ENCODE measurements at regions of chr22 and their contacts with region 1.

Region 1: DNA sequence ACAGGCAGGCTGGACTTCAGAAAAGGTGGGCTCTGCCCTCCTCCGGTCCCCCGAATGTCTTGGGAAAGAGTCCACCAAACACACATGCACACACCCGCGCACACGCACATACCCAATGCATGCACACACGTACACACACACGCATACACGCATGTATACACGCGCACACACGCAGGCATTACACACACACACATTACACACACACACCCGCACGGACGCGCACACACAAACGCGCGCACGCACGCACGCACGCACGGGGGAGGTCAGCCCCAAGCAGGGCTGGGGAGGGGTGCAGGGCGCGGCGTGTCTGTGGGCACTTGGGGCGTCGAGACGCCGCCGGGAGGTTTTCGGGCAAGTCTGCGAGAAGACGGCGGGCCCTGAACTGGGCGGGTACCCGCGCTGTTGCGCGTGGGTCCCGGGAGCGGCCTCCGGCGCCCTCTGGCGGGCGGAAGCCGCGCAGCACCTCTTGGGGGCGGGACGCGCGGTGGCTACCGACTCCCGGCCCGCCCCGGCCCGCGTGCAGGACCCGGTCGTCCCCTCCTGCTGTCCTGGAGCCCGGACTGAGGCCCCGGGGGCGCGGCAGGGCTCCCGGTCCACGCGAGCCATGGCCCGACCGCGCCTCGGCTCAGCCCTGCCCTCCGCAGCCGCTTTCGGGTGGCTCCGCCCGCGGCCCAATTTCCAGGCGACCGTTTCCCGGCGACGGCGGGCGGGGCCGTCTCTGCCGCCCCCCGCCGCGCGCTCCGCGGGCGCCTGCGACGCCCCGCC is 3.6 kb downstream of the SEPTIN5 start:
- DNase-seq: peak; percentile 68 to 93 (median 86)
- ATAC-seq: peak; percentile 97
- H3K4me3 ChIP-seq: peak overlapping the region; percentile 41
- H3K4me3 Mint-ChIP-seq: peak overlapping the region; percentile 72 to 88 (median 82)
- H3K27ac ChIP-seq: no peak overlapping the region
- H3K27ac Mint-ChIP-seq: peak overlapping the region in 3 of 9 donors; percentile 5 to 14 (median 9)
- H3K4me1 ChIP-seq: peaks cover 0 to 10% of the 10 kb centered on the region in 2 donors
- H3K4me1 Mint-ChIP-seq: peaks cover 0 to 10% (median 8%) of the 10 kb centered on the region in 7 donors
- H3K27me3 ChIP-seq: peaks cover 0 to 3% of the 10 kb centered on the region in 2 donors
- H3K27me3 Mint-ChIP-seq: peaks cover 28 to 59% (median 35%) of the 10 kb centered on the region in 5 donors

Region 2: GRCh38 chr22:19143967-19144400 is 573.9 kb before region 1 on chr22:
- CTCF ChIA-PET with region 1: no interaction called
- POLR2A ChIA-PET with region 1: no interaction called
- intact Hi-C with region 1: loop called in 1 of 2 experiments (anchors 1 kb)
- DNase-seq: peak in 6 of 9 donors; percentile 8 to 40 (median 26)
- ATAC-seq: no peak
- H3K4me3 ChIP-seq: peak overlapping the region; percentile 83
- H3K4me3 Mint-ChIP-seq: peak overlapping the region; percentile 84 to 99 (median 98)
- H3K27ac ChIP-seq: peak overlapping the region; percentile 93
- H3K27ac Mint-ChIP-seq: peak overlapping the region; percentile 91 to 99 (median 97)
- H3K4me1 ChIP-seq: no peaks in the 10 kb centered on the region
- H3K4me1 Mint-ChIP-seq: peaks cover 8 to 32% (median 18%) of the 10 kb centered on the region in 7 donors
- H3K27me3 ChIP-seq: peaks cover 0 to 1% of the 10 kb centered on the region in 2 donors
- H3K27me3 Mint-ChIP-seq: peaks cover 9 to 33% (median 11%) of the 10 kb centered on the region in 5 donors

Region 3: DNA sequence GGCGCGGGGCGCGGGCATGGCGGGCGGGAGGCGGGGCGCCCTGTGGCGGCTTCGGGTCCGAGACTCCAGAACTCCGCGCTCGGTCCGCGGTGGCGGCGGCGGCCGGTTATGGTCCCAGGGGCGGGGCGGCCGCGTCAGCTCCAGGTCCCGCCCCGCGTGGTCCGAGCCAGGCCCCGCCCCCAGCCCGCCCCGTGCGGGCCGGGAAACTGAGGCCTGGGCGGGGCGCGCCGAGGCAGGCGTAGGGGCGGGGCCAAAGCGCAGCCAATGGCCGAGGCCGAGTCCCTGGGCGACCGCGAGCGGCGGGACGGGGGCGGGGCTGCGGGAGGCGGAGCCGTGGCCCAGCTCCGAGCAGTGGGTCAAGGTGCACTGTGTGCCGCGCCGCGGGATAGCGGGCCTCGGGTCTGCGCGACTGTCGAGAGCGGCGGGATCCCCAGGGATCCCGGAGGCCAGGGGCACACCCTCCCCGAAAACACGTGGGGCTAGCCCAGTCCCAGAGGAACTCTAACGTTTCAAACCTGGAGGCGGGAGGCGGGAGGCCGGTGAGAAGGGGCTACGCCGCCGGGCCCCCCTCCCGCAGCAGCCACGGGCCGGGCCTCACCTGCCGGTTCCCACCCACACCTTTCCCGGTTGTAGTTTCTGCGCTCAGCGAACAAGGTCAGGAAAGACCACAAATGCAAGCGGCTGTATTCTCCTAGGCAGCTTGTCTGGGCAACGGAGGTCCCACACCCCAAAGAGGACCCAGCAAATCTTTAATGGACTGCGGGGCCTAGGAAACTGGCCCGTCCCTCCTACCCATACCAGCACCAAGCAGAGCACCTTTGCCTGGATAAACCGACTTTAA is 539.0 kb before region 1 on chr22 and contains the start of gene SLC25A1:
- CTCF ChIA-PET with region 1: no interaction called
- POLR2A ChIA-PET with region 1: no interaction called
- intact Hi-C with region 1: loop called in 1 of 2 experiments (anchors 2 kb)
- DNase-seq: peak in 8 of 9 donors; percentile 42 to 96 (median 49)
- ATAC-seq: peak; percentile 82
- H3K4me3 ChIP-seq: peak within 1 kb of the TSS; percentile 58
- H3K4me3 Mint-ChIP-seq: peak within 1 kb of the TSS; percentile 83 to 92 (median 86)
- H3K27ac ChIP-seq: peak within 1 kb of the TSS; percentile 63
- H3K27ac Mint-ChIP-seq: peak within 1 kb of the TSS; percentile 31 to 92 (median 85)
- H3K4me1 ChIP-seq: peaks cover 7 to 9% of the 10 kb centered on the region in 2 donors
- H3K4me1 Mint-ChIP-seq: peaks cover 13 to 28% (median 23%) of the 10 kb centered on the region in 7 donors
- H3K27me3 ChIP-seq: no peaks in the 10 kb centered on the region
- H3K27me3 Mint-ChIP-seq: no peaks in the 10 kb centered on the region
- total RNA-seq, gene SLC25A1: 19.3 to 34.0 (median 30.7) TPM

Region 4: GRCh38 chr22:19495562-19496323 is 222.1 kb before region 1 on chr22:
- CTCF ChIA-PET with region 1: no interaction called
- POLR2A ChIA-PET with region 1: no interaction called
- intact Hi-C with region 1: loop called in 1 of 2 experiments (anchors 5 kb)
- DNase-seq: peak in 7 of 9 donors; percentile 35 to 67 (median 57)
- ATAC-seq: peak; percentile 63
- H3K4me3 ChIP-seq: no peak overlapping the region
- H3K4me3 Mint-ChIP-seq: no peak overlapping the region
- H3K27ac ChIP-seq: no peak overlapping the region
- H3K27ac Mint-ChIP-seq: peak overlapping the region; percentile 49 to 88 (median 73)
- H3K4me1 ChIP-seq: peaks cover 0 to 9% of the 10 kb centered on the region in 2 donors
- H3K4me1 Mint-ChIP-seq: peaks cover 4 to 17% (median 12%) of the 10 kb centered on the region in 7 donors
- H3K27me3 ChIP-seq: no peaks in the 10 kb centered on the region
- H3K27me3 Mint-ChIP-seq: no peaks in the 10 kb centered on the region

Region 5: DNA sequence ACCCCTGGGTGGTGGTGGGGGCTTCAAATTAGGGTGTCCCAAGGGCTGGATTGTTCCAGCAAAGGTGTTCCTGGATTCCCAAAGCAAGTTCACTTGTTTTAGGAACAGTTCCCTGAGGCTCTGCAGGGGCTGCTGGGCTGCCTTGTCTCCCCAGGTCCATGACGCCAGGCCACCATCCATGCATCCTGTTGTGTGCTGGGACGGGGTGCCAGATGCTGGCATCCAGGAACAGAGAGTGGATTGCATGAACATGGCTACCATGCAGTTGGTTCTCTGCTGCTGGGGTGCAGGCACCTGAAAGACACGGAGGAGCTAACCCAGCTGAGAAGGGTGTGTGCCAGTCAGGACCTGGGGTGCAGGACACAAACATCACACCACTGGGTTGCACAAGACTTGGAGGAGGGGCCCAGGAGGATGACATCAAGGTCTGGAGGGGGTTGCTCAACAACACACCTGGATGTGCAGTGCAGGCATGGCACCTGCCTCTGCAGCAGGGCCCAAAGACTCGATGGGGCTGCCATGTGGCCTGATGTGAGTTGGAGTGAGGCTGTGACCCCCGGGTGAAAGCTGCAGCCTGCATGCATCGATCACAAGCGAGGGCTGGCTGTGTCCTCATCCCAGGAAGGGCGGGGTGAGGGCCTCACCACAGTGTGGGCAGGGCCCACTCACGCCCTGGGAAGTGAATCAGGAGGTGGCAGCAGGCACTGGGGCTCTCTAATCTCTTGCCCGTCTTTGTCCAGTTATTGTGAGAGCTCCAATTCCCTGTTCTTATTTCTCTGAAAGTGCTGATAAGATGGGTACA is 119.6 kb before region 1 on chr22:
- CTCF ChIA-PET with region 1: no interaction called
- POLR2A ChIA-PET with region 1: no interaction called
- intact Hi-C with region 1: no loop called
- DNase-seq: peak in 7 of 9 donors; percentile 20 to 57 (median 38)
- ATAC-seq: no peak
- H3K4me3 ChIP-seq: peak overlapping the region; percentile 25
- H3K4me3 Mint-ChIP-seq: peak overlapping the region; percentile 61 to 88 (median 76)
- H3K27ac ChIP-seq: peak overlapping the region; percentile 75
- H3K27ac Mint-ChIP-seq: peak overlapping the region; percentile 83 to 100 (median 97)
- H3K4me1 ChIP-seq: peaks cover 11 to 63% of the 10 kb centered on the region in 2 donors
- H3K4me1 Mint-ChIP-seq: peaks cover 40 to 95% (median 79%) of the 10 kb centered on the region in 7 donors
- H3K27me3 ChIP-seq: no peaks in the 10 kb centered on the region
- H3K27me3 Mint-ChIP-seq: no peaks in the 10 kb centered on the region

Region 6: GRCh38 chr22:19619144-19620009 is 98.5 kb before region 1 on chr22:
- CTCF ChIA-PET with region 1: no interaction called
- POLR2A ChIA-PET with region 1: no interaction called
- intact Hi-C with region 1: no loop called
- DNase-seq: peak in 2 of 9 donors; percentile 8 to 16
- ATAC-seq: no peak
- H3K4me3 ChIP-seq: no peak overlapping the region
- H3K4me3 Mint-ChIP-seq: peak overlapping the region in 5 of 10 donors; percentile 20 to 43 (median 36)
- H3K27ac ChIP-seq: no peak overlapping the region
- H3K27ac Mint-ChIP-seq: peak overlapping the region in 6 of 9 donors; percentile 9 to 76 (median 54)
- H3K4me1 ChIP-seq: peaks cover 0 to 13% of the 10 kb centered on the region in 2 donors
- H3K4me1 Mint-ChIP-seq: peaks cover 14 to 27% (median 19%) of the 10 kb centered on the region in 7 donors
- H3K27me3 ChIP-seq: no peaks in the 10 kb centered on the region
- H3K27me3 Mint-ChIP-seq: no peaks in the 10 kb centered on the region

Region 7: GRCh38 chr22:19679522-19680101 is 38.3 kb before region 1 on chr22:
- CTCF ChIA-PET with region 1: interaction called, 3 read pairs
- POLR2A ChIA-PET with region 1: no interaction called
- intact Hi-C with region 1: loop called (anchors 1 to 2 kb)
- DNase-seq: peak; percentile 5 to 54 (median 23)
- ATAC-seq: peak; percentile 54
- H3K4me3 ChIP-seq: no peak overlapping the region
- H3K4me3 Mint-ChIP-seq: no peak overlapping the region
- H3K27ac ChIP-seq: no peak overlapping the region
- H3K27ac Mint-ChIP-seq: no peak overlapping the region
- H3K4me1 ChIP-seq: no peaks in the 10 kb centered on the region
- H3K4me1 Mint-ChIP-seq: no peaks in the 10 kb centered on the region
- H3K27me3 ChIP-seq: peaks cover 0 to 2% of the 10 kb centered on the region in 2 donors
- H3K27me3 Mint-ChIP-seq: peaks cover 18 to 28% (median 23%) of the 10 kb centered on the region in 5 donors

Region 8: GRCh38 chr22:19687561-19688300 is 30.1 kb before region 1 on chr22:
- CTCF ChIA-PET with region 1: no interaction called
- POLR2A ChIA-PET with region 1: interaction called, 5 read pairs
- intact Hi-C with region 1: loop called in 1 of 2 experiments (anchors 1 kb)
- DNase-seq: no peak
- ATAC-seq: peak; percentile 61
- H3K4me3 ChIP-seq: no peak overlapping the region
- H3K4me3 Mint-ChIP-seq: no peak overlapping the region
- H3K27ac ChIP-seq: no peak overlapping the region
- H3K27ac Mint-ChIP-seq: no peak overlapping the region
- H3K4me1 ChIP-seq: no peaks in the 10 kb centered on the region
- H3K4me1 Mint-ChIP-seq: peaks cover 0 to 7% (median 0%) of the 10 kb centered on the region in 7 donors
- H3K27me3 ChIP-seq: no peaks in the 10 kb centered on the region
- H3K27me3 Mint-ChIP-seq: peaks cover 3 to 15% (median 5%) of the 10 kb centered on the region in 5 donors

Region 9: DNA sequence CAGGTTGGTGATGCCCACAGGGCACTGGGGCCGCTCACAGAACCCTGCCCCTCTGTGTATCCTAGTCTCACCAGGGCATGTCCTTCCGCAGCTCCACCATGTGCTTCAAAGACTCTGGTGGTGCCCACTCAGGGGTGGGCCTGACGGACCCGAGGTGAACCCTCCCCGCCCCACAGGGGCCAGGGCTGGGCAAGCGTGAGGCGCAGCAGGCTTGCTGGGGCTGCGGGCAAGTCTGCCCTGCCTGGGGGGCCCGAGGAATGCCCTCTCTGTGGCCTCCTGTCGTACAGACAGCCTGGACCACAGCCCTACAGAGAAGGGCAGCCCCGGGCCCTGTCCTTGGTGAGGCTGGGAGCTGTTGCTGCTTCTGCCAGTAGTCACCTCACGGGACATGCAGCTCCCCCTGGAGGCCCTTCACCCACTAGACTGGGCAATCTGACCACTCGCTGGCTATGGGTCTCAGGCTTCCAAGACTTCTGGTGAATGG is 82.9 kb after region 1 on chr22:
- CTCF ChIA-PET with region 1: no interaction called
- POLR2A ChIA-PET with region 1: no interaction called
- intact Hi-C with region 1: no loop called
- DNase-seq: no peak
- ATAC-seq: no peak
- H3K4me3 ChIP-seq: no peak overlapping the region
- H3K4me3 Mint-ChIP-seq: no peak overlapping the region
- H3K27ac ChIP-seq: no peak overlapping the region
- H3K27ac Mint-ChIP-seq: no peak overlapping the region
- H3K4me1 ChIP-seq: peaks cover 0 to under 1% of the 10 kb centered on the region in 2 donors
- H3K4me1 Mint-ChIP-seq: peaks cover 0 to 9% (median 6%) of the 10 kb centered on the region in 7 donors
- H3K27me3 ChIP-seq: no peaks in the 10 kb centered on the region
- H3K27me3 Mint-ChIP-seq: no peaks in the 10 kb centered on the region

Region 10: GRCh38 chr22:20238536-20238900 is 520.6 kb after region 1 on chr22:
- CTCF ChIA-PET with region 1: no interaction called
- POLR2A ChIA-PET with region 1: no interaction called
- intact Hi-C with region 1: no loop called
- DNase-seq: peak in 7 of 9 donors; percentile 28 to 50 (median 38)
- ATAC-seq: peak; percentile 64
- H3K4me3 ChIP-seq: no peak overlapping the region
- H3K4me3 Mint-ChIP-seq: peak overlapping the region in 8 of 10 donors; percentile 29 to 54 (median 40)
- H3K27ac ChIP-seq: peak overlapping the region; percentile 49
- H3K27ac Mint-ChIP-seq: peak overlapping the region; percentile 36 to 87 (median 79)
- H3K4me1 ChIP-seq: peaks cover 31 to 59% of the 10 kb centered on the region in 2 donors
- H3K4me1 Mint-ChIP-seq: peaks cover 8 to 47% (median 14%) of the 10 kb centered on the region in 7 donors
- H3K27me3 ChIP-seq: no peaks in the 10 kb centered on the region
- H3K27me3 Mint-ChIP-seq: no peaks in the 10 kb centered on the region